Breast epithelium (tissue), 4 donors: ENCODE measurements at regions of chr14 and their contacts with region 1.

Region 1: DNA sequence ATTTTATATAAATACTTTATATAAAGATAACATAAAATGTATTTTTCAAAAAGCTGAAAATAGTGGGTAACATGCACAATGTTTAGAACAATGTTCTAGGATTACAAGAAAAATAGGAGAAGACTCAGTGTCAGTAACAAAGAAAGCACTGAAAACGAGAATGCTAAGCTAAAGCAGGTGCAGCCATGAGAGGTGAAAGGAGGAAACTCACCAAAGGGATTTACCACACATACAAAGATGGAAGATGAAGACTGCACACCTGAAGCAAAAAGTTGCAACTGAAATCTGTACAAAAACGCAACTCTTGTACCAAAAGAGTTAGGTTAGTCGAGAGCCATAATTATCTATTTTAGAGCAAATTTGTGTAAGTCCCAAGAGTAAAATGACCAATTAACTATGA is 1176.1 kb downstream of the LRFN5 start:
- DNase-seq: no peak
- H3K4me3 ChIP-seq: no peak overlapping the region
- H3K27ac ChIP-seq: no peak overlapping the region
- H3K4me1 ChIP-seq: no peaks in the 10 kb centered on the region
- H3K27me3 ChIP-seq: no peaks in the 10 kb centered on the region
- CTCF ChIP-seq: no peak
- POLR2A ChIP-seq: no peak

Region 2: GRCh38 chr14:42602336-42602845 is 180.4 kb before region 1 on chr14:
- intact Hi-C with region 1: loop called (anchors 5 kb)
- DNase-seq: no peak
- H3K4me3 ChIP-seq: no peak overlapping the region
- H3K27ac ChIP-seq: no peak overlapping the region
- H3K4me1 ChIP-seq: no peaks in the 10 kb centered on the region
- H3K27me3 ChIP-seq: no peaks in the 10 kb centered on the region
- CTCF ChIP-seq: no peak
- POLR2A ChIP-seq: no peak

Region 3: DNA sequence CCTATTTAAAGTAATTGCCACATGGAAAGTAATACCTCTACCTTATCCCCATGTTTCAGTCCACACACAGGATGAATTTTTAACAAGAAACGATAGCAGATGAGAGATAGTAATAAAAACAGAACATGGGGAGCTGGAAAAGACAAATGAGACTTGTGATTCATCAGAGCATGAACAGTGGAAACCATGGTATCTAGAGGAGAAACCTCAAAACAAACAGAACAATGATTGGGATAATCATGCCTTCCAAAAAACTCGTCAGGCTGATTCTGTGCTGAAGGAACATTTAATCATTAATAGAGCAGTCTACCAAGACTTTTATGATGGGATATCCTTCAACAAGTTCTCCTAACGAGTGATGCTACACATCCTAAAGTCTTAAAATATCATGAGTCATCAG is 333.6 kb after region 1 on chr14:
- intact Hi-C with region 1: no loop called
- DNase-seq: no peak
- H3K4me3 ChIP-seq: no peak overlapping the region
- H3K27ac ChIP-seq: no peak overlapping the region
- H3K4me1 ChIP-seq: no peaks in the 10 kb centered on the region
- H3K27me3 ChIP-seq: no peaks in the 10 kb centered on the region
- CTCF ChIP-seq: no peak
- POLR2A ChIP-seq: no peak